Cardiac septum (tissue), 1 donor: ENCODE measurements at regions of chr11 and their contacts with region 1.

Region 1: GRCh38 chr11:36564376-36565030 is 3.3 kb upstream of the RAG1 start:
- DNase-seq: no peak

Region 2: DNA sequence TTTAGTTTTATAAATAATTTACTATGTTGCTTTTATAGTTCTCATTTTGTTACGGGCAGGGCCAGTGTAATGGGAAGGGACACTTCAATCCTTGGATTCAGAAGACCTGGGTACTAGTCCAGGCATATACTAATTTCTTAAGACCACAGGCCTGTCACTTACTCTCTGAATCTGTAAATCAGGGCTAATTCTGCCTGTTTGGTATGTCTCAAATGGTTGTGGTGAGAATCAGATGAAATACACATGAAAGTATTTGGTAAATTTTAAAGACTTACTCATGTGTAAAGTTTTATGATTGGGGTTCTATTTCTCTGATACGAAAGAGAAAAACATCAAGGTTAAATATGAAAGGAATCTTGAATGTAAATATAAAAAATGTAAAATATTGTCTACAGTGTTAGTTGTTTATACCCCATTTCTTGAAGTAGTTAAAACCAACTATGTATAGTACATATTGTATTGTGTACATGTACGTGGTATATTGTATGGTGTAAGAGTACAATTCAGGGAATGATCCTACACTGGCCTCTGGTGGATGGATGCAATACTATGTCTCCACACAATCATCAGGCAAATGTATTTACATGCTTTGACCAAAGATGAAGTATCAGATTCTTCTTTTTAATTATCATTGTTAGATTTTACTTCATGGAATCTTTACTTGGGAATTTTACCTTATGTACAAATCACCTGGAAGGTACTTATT is 58.1 kb after region 1 on chr11:
- intact Hi-C with region 1: loop called (anchors 5 kb)
- DNase-seq: no peak

Region 3: GRCh38 chr11:36657610-36658267 is 93.2 kb after region 1 on chr11:
- intact Hi-C with region 1: no loop called
- DNase-seq: no peak

Region 4: DNA sequence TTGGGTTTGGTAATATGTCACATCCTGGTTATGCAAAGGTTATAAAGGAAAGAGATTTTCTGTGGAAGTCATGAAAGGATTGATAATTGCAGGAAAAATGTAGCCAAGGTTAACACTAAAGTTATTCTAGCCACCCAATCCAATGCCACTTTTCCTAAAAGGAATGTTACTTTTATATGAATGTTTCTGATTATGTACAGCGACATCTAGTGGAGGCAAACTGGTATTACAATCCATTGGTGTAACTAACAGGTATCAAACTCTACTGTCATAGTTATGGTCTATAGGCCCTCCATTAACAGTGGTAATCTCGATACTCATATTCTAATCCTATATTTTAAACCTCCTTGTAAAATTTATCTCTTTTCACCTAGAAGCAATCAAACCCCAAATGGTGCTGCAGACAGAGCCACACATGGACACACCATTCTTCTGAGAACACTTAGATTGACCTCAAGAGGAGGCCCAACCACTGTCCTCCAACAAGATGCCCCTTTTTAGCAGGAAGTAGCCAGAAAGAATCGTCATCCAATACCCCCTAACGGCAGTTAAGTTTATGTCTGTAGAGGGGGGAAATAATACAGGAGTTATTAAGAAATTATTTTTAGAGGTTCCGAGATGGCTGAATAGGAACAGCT is 108.4 kb after region 1 on chr11:
- intact Hi-C with region 1: loop called (anchors 1 kb)
- DNase-seq: no peak

Region 5: DNA sequence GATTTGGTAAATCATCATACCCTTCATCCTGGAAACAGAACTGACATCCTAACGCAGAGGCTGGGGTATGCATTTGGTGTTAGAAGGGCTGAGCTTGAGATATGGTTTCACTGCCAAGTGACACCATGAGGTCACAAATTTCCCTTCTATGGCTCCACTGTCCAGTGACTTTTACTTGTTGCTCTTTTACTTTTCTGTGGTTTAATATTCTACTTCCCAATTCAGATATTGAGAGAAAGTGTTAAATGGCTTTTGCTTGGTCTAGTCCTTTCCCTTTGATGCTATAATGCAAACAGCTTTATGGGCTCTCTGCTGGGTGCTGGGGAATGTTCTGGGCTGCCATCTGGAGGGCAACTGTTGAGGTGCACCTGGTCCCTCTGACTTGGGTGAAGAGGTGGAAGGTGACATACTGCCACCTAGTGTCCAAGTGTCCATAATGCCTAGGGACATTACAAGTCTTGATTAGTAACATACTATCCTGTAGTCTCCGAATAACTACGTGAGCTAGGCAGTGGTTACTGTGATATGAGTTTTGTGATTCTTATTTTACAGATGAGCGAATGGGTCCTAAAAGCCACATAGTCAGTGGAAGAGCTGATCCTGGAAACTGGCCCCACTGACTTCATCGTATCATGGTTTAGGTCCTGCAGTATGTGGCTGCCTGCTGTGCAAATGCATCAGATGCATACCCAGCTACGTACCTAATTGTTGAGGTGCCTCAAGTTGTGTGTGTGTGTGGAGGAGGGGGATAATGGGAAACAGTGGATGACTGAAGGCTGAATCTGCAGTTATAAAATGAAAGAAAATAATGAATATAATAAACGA is 182.6 kb after region 1 on chr11:
- intact Hi-C with region 1: loop called (anchors 5 kb)
- DNase-seq: peak; percentile 85